ENCODE measurements at regions of chr10 and their contacts with region 1.

Region 1: GRCh38 chr10:103534581-103535508 is 41.3 kb downstream of the NEURL1 start:
- DNase-seq: no peak
- ATAC-seq: peak; percentile 33 to 86 (median 74)
- H3K4me3 ChIP-seq: no peak overlapping the region
- H3K27ac ChIP-seq: no peak overlapping the region
- H3K4me1 ChIP-seq: no peaks in the 10 kb centered on the region
- H3K27me3 ChIP-seq: no peaks in the 10 kb centered on the region
- CTCF ChIP-seq: no peak

Region 2: DNA sequence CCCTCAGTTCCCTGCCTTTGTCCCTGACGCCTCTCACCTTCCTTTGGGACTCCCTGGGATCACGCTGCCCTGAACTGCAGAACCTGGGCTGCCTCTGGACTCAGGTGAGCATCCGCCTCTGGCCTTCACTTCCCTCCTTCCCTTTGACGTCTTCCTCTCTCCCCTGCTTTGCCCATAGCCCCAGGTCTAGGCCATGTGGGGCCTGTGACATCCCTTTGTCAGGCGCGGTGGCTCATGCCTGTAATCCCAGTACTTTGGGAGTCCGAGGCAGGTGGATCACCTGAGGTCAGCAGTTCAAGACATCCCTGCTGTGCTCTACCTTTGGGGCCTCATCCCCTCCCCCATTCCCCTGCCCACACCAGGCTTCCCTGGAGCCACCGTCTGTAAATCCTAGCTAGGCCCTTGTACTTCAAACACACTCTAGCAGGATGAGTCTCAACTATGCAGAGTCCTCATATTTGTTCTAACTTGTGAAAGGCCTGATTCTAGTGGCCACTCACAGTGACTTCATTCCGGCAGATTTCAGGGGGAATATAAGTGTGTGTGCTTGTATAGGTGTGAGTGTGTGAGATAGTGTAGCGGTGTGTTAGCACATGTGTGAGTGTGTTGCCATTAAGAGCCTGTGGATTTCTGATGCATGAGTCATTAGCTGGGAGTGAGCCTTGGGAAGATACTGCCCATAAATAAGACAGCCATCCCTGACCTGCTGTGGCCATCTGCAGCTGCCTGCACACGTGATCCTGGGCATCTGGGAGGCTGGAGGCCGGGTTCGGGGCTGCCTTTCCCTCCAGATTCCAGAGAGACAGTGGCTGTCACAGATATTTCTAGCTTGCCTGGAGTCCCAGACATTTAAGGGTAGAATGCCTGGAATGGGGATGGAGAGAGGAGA is 43.1 kb before region 1 on chr10:
- intact Hi-C with region 1: loop called in 1 of 2 experiments (anchors 1 kb)
- DNase-seq: peak in 1 of 2 donors; percentile 56
- ATAC-seq: peak; percentile 67 to 86 (median 76)
- H3K4me3 ChIP-seq: no peak overlapping the region
- H3K27ac ChIP-seq: no peak overlapping the region
- H3K4me1 ChIP-seq: peaks cover 5% of the 10 kb centered on the region
- H3K27me3 ChIP-seq: peaks cover 0 to 36% (median 4%) of the 10 kb centered on the region in 3 donors
- CTCF ChIP-seq: no peak

Region 3: DNA sequence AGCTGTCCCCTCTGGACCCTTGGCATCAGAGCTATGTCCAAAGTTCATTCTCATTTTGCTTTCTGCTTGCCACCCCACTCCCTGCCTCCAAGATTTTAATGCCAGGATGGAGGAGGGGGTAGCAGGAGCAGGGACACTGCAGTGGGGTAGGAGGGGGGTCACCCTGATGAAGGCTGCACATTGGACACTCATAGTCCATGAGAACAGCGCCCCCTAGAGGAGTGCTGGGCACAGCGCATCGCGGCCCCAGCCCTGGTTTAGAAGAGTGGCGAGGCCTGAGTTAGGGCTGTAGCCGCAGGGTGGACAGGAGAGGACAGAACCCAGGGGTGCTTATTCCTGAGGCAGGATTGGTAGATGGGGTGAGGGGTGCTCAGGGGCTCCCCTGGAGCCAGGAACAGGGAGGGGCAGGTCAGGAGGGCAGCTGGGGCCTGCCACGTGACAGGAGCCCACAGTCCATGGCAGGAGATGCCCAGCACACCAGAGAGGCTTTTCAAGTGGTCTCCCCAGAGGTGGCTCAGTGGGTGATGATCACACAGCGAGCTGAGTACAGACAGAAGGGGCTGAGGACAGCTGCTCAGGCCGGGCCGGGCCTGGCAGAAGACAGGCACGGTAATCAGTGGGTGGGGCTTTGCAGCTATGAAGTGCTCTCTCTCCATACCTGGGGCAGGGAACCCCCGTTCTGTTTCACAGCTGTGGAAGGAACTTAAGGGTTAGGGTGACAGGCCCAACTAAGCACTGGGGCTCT is 30.1 kb after region 1 on chr10:
- intact Hi-C with region 1: no loop called
- DNase-seq: peak in 1 of 2 donors; percentile 67
- ATAC-seq: peak; percentile 26 to 73 (median 64)
- H3K4me3 ChIP-seq: no peak overlapping the region
- H3K27ac ChIP-seq: peak overlapping the region; percentile 46
- H3K4me1 ChIP-seq: peaks cover 18% of the 10 kb centered on the region
- H3K27me3 ChIP-seq: no peaks in the 10 kb centered on the region
- CTCF ChIP-seq: peak; percentile 53

Measured in psoas muscle (tissue), 8 donors.